ENCODE measurements at regions of chr10 and their contacts with region 1.

Region 1: DNA sequence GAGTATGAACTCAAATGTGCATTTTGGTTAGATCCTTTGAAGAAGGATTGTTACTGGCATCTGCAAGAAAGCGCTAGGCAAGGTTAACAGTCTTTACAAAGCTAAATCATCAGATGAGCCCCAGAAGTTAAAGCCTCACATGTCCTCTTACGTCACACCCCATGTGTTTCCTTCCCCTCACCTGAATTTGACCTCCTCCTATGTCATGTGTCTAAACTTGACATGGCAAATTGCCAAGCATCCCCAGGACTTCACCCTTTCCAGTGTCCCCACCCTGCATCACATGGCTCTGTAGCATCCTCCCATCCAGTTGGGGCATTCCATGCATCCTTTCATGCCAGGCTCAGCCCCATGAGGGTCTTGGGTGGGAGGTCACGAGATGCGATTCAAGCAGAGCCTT is 245.2 kb upstream of the PFKP start:
- DNase-seq: no peak
- H3K4me3 ChIP-seq: no peak overlapping the region
- H3K27ac ChIP-seq: no peak overlapping the region
- H3K4me1 ChIP-seq: no peaks in the 10 kb centered on the region
- H3K27me3 ChIP-seq: no peaks in the 10 kb centered on the region
- CTCF ChIP-seq: no peak

Region 2: GRCh38 chr10:2782265-2782664 is 39.9 kb before region 1 on chr10:
- CTCF ChIA-PET with region 1: no interaction called
- dilution Hi-C with region 1: loop called (anchors 5 kb)
- in situ Hi-C with region 1: no loop called
- intact Hi-C with region 1: no loop called
- DNase-seq: no peak
- H3K4me3 ChIP-seq: no peak overlapping the region
- H3K27ac ChIP-seq: no peak overlapping the region
- H3K4me1 ChIP-seq: no peaks in the 10 kb centered on the region
- H3K27me3 ChIP-seq: no peaks in the 10 kb centered on the region
- CTCF ChIP-seq: no peak